Mammary epithelial cell (primary cell): ENCODE measurements at regions of chr11 and their contacts with region 1.

Region 1: GRCh38 chr11:87463486-87464102 is 425.9 kb downstream of the TMEM135 start:
- DNase-seq: peak; percentile 54
- H3K4me3 ChIP-seq: no peak overlapping the region
- H3K27ac ChIP-seq: no peak overlapping the region
- H3K4me1 ChIP-seq: no peaks in the 10 kb centered on the region
- H3K27me3 ChIP-seq: peaks cover 5% of the 10 kb centered on the region
- CTCF ChIP-seq: peak; percentile 42 to 73

Region 2: DNA sequence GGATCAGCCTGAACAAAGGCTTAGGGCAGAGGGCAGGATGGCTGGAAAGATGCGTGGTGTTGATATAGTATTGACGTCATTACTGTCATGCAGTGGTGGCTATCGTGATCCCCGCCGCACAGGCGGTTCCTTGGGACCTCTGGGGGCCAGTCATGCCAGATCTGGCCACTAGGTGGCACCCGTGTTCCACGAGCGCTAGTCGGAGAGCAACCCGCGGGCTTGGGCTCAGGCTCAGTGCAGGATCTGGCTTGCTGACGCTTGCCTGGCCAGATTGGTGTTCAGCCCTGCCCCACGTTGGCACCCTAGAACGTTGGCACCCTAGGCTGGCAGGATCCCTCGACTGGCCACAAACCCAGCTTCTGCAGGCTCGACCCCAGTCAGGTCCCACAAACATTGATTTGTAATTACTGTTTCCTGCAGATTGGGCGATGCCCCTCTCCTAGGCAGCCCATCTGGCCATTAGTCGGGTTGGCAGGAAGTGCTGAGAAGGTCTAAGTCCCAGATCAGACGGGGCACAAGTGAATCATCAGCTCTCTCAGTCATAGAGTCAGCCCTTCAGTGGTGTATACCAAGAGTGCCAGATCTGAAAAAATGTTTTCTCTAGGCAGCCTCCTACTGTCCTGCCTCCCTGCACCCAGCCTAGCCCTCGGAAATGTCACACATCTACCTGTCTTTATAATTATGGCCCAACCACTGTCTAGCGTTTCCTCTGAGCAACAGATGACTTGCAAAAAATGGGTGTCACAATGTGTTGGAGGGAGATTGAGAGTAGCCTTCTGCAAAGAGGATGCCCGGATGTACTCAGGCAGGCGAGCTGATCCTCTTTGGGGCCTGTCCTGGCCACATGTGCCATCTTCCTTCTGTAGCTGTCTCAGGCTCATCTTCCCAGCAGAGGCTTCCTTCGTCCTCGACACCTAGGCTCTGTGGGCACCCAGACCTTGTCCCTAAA is 110.6 kb before region 1 on chr11:
- CTCF ChIA-PET with region 1: no interaction called
- dilution Hi-C with region 1: no loop called
- in situ Hi-C with region 1: no loop called
- intact Hi-C with region 1: loop called (anchors 1 kb)
- DNase-seq: peak; percentile 78
- H3K4me3 ChIP-seq: peak overlapping the region in 2 of 3 experiments; percentile 13 to 30
- H3K27ac ChIP-seq: no peak overlapping the region
- H3K4me1 ChIP-seq: peaks cover 8% of the 10 kb centered on the region
- H3K27me3 ChIP-seq: no peaks in the 10 kb centered on the region
- CTCF ChIP-seq: peak; percentile 89 to 99

Region 3: DNA sequence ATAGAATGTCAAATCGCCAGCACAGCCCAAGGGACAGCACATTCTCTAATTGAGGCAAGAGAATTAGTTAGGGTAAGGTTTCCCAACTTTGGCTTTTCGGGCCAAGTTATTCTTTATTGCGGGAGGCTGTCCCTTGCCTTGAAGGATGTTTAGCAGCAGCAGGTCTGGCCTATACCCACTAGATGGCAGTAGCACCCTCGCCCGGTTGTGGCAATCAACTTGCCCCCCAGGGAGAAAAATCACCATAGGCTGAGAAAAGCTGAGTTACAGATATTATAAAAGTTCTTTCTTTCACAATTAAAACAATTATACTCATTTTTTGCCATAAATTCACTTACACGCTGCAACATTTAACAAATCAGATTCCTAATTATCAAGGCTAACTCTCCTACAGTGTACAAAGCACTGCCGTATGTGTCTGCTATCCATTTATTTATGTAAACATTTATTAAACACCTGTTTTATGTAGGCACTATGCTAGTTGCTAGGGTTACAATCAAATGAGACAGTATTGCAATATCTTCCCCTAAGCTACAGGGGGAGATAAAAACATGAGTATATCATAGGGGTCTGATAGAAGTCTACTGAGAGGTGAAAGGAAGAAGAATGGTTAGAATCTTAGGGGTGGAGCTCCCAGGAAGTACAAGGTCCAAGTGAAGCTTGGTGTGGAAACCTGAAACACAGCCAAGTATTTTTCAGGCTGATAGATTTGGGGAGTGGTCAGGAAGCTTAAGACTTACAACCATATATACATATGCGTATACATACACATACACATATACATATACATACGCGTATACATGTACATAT is 259.4 kb after region 1 on chr11:
- CTCF ChIA-PET with region 1: no interaction called
- dilution Hi-C with region 1: no loop called
- in situ Hi-C with region 1: no loop called
- intact Hi-C with region 1: loop called (anchors 2 kb)
- DNase-seq: peak; percentile 7
- H3K4me3 ChIP-seq: no peak overlapping the region
- H3K27ac ChIP-seq: no peak overlapping the region
- H3K4me1 ChIP-seq: no peaks in the 10 kb centered on the region
- H3K27me3 ChIP-seq: peaks cover 2% of the 10 kb centered on the region
- CTCF ChIP-seq: peak; percentile 78 to 91

Region 4: DNA sequence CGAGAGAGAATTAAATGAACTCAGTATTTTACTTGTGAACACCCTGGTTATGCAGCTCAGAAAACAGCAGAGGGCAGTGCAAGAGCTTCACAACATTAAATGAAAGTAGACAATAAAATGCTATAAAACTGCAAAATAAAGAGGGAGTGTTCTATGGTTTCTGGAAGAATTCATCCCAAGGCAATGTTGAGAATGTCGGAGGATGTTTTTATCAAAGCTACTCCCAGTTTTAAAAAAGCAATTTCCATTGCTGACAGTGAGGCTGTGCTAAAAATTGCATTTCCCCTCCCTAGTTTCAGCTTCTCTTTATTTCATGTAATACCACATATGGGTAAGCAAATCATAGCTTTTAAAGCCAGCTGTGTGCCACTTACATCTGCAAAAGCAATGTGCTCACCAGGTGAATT is 414.8 kb after region 1 on chr11:
- CTCF ChIA-PET with region 1: no interaction called
- dilution Hi-C with region 1: no loop called
- in situ Hi-C with region 1: no loop called
- intact Hi-C with region 1: loop called (anchors 5 kb)
- DNase-seq: peak; percentile 13
- H3K4me3 ChIP-seq: no peak overlapping the region
- H3K27ac ChIP-seq: no peak overlapping the region
- H3K4me1 ChIP-seq: no peaks in the 10 kb centered on the region
- H3K27me3 ChIP-seq: no peaks in the 10 kb centered on the region
- CTCF ChIP-seq: peak; percentile 59 to 60

Region 5: DNA sequence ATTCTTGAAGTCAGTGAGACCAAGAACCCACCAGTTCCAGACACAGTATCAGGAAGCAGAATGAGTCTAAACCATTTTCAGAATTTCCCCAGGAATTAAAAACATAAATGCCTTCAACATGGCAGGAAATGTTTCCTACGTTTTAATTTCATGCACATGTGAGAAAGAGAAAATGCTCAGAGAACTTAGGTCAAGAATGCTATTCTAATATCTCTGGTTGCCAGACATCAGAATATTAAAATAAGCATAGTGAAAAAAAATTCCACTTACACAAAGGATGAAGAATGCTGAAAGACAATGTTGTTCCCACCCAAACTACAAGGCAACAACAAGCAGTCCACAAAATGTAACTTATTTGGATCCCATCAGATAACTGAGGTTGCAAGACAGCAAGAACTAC is 606.8 kb after region 1 on chr11:
- CTCF ChIA-PET with region 1: interaction called, 13 read pairs
- dilution Hi-C with region 1: no loop called
- in situ Hi-C with region 1: no loop called
- intact Hi-C with region 1: no loop called
- DNase-seq: no peak
- H3K4me3 ChIP-seq: no peak overlapping the region
- H3K27ac ChIP-seq: no peak overlapping the region
- H3K4me1 ChIP-seq: no peaks in the 10 kb centered on the region
- H3K27me3 ChIP-seq: no peaks in the 10 kb centered on the region
- CTCF ChIP-seq: no peak

Region 6: GRCh38 chr11:88281317-88281712 is 817.7 kb after region 1 on chr11:
- CTCF ChIA-PET with region 1: no interaction called
- dilution Hi-C with region 1: no loop called
- in situ Hi-C with region 1: loop called in 1 of 2 experiments (anchors 25 kb)
- intact Hi-C with region 1: loop called (anchors 5 kb)
- DNase-seq: no peak
- H3K4me3 ChIP-seq: no peak overlapping the region
- H3K27ac ChIP-seq: no peak overlapping the region
- H3K4me1 ChIP-seq: peaks cover 6% of the 10 kb centered on the region
- H3K27me3 ChIP-seq: no peaks in the 10 kb centered on the region
- CTCF ChIP-seq: peak; percentile 14 to 44

Region 7: GRCh38 chr11:88292171-88292843 is 828.7 kb after region 1 on chr11:
- CTCF ChIA-PET with region 1: no interaction called
- dilution Hi-C with region 1: no loop called
- in situ Hi-C with region 1: loop called in 1 of 2 experiments (anchors 25 kb)
- intact Hi-C with region 1: no loop called
- DNase-seq: peak; percentile 35
- H3K4me3 ChIP-seq: no peak overlapping the region
- H3K27ac ChIP-seq: no peak overlapping the region
- H3K4me1 ChIP-seq: peaks cover 6% of the 10 kb centered on the region
- H3K27me3 ChIP-seq: no peaks in the 10 kb centered on the region
- CTCF ChIP-seq: peak; percentile 7 to 37